Heart left ventricle (tissue), 16 donors: ENCODE measurements at regions of chr9 and their contacts with region 1.

Region 1: DNA sequence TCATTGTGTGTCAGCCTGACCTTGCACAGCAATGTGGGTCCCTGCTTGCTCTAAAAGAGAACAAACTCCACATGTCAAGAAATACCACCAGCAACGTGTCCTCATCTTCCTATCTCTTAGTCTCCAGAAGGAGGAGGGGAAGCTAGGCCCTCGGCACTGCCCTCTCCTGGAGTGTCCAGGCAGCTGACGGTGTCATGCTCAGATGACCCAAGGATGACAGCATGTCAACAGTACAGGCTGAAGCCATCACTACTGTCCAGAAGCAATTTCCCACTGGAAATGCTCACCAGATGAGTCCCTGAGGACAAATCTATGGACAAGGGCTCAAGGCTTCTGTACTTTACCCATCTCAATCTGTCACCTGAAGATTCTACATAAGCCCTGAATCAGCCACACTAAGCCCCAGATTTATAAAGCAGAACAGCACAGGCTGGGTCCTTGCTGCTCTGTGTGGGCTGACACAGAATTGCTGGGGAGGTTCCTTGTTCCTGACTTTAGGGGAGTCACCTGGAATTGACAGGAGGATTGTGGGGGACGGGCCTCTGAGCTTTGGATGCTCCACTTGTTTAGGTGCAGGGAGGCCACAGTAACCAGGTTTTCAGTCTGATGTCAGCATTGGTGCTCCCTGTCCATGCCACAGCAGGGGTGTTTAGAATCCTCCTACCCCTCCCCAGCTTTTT is 210.2 kb downstream of the DAB2IP start:
- DNase-seq: peak; percentile 38 to 71 (median 61)
- ATAC-seq: peak; percentile 68 to 87 (median 82)
- H3K4me3 ChIP-seq: no peak overlapping the region
- H3K27ac ChIP-seq: no peak overlapping the region
- H3K4me1 ChIP-seq: peaks cover 0 to 19% (median 11%) of the 10 kb centered on the region in 12 donors
- H3K27me3 ChIP-seq: no peaks in the 10 kb centered on the region
- CTCF ChIP-seq: peak; percentile 32 to 74 (median 62)
- POLR2A ChIP-seq: no peak

Region 2: DNA sequence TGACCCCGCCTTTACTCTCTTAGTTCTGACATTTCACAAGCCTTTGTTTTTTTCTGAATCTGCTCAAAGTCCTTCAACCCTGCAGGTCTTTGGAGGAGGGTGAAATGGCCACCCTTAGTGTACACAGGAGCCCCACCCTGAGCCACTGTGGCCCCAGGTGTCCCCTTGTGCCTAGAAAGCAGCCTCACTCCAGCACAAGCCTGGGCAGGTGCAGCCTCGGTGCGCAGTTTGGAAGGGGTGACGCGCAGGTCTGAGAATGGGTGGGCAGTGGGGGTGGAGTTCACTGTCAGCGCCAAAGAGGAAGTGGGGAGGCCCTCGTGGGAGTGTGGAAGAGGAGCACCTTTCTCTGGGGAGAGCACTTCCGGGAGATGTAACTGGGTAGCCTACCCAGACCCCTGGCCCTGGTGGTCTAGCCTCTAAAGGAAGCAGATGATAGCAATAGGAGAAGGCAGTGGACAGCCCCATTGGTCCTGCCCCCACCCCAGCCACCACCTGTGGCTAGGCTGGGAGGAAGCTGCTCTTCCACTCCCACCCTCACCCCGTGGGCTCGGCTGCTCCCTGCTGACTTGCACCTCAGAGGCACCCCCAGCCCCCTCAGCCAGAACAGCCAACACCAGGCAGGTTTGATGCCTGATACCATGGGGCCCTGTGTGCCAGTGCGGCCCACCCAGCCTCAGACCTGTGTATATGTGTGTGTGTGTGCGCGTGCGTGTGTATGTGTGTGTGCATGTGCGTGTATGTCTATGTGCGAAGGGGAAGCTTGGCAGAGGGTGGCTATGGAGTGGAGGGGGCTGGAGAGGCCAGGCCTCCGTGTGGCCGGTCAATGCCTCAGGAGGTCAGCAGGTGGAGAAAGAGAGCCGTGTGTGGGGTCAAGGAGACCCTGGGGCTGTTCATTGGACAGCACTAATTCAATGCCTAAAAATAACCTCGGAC is 227.0 kb before region 1 on chr9:
- intact Hi-C with region 1: loop called in 4 of 10 experiments (anchors 10 kb)
- DNase-seq: no peak
- ATAC-seq: peak; percentile 60 to 79 (median 64)
- H3K4me3 ChIP-seq: no peak overlapping the region
- H3K27ac ChIP-seq: peak overlapping the region in 5 of 12 donors; percentile 6 to 66 (median 34)
- H3K4me1 ChIP-seq: peaks cover 15 to 60% (median 43%) of the 10 kb centered on the region in 12 donors
- H3K27me3 ChIP-seq: no peaks in the 10 kb centered on the region
- CTCF ChIP-seq: peak; percentile 35 to 74 (median 62)
- POLR2A ChIP-seq: no peak

Region 3: DNA sequence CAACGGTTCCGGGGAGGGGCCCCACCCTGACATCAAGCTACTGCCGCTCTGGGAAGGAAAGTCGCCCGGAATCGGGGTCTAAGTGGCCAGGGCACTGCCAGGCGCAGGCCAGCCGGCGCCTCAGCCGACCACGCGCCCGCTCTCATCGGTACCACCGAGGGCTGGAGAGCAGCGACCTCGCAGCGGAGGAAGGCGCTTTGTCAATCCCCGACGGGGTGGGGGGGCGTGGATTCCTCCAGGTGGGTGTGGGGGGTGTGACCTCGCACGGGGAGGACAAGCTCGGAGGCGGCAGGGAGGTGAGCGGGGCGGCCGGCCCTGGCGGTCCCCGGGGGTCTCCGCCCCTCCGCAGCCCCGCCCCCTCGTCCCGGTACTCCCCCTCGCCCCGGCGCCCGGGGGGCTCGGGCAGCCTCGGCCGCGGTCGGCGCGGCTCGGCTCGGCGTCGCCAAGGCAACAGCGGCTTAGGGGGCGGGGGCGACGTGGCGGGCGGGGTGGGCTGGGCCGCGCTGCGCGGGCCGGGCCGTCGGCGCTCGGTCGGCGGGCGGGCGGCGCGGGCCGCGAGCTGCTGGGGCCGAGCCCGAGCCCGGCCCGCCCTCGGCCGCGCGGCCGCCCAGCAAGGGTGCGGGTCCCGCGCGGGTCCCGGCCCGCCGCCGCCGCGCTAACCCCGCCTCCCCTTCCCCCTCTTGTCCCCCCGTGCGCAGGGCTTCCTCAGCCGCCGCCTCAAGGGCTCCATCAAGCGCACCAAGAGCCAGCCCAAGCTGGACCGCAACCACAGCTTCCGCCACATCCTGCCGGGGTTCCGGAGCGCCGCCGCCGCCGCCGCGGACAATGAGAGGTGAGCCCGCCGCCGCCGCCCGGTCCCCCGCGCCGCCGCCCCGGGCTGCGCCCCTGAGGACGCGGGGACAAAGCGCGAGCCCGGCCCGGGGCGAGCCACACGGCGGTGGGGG is 162.7 kb before region 1 on chr9:
- intact Hi-C with region 1: loop called in 1 of 10 experiments (anchors 5 kb)
- DNase-seq: peak; percentile 69 to 85 (median 78)
- ATAC-seq: peak in 3 of 4 donors; percentile 39 to 44 (median 44)
- H3K4me3 ChIP-seq: peak overlapping the region; percentile 19 to 77 (median 58)
- H3K27ac ChIP-seq: peak overlapping the region; percentile 48 to 88 (median 80)
- H3K4me1 ChIP-seq: peaks cover 17 to 61% (median 36%) of the 10 kb centered on the region in 12 donors
- H3K27me3 ChIP-seq: peaks cover 0 to 37% (median 0%) of the 10 kb centered on the region in 9 donors
- CTCF ChIP-seq: no peak
- POLR2A ChIP-seq: no peak

Region 4: DNA sequence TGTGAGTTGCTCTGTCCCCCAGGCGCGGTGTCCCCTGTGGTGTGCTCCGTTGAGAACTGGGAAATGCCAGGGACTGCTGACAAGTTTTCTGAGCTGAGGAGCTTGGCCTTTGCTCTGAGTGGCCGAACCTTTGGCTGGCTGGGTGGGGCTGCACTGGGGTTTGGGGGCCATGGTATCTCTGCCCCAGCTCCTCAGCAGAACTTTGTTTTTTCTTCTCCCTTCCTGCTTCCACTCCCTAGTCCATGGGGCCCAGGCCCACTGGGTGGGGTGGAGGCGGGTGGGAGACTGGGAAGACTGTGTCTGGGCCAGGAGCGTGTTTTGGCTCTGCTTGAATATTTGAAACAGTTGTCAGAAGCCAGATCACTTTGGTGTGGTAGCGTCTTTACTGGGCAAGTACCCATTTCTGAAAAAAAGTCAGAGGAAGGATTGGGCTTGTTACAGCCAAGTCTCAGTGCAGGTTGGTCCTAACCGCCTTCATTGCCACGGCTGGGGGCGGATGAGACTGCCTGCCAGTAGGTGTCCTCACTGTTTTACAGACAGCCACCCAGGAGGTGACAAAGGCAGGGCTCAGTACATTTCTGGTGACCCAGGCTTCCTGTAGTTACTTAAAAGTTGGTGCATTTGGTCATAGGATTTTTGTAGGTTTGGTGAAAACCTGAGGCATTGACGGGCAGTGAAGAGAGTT is 117.5 kb before region 1 on chr9:
- intact Hi-C with region 1: loop called in 3 of 10 experiments (anchors 5 kb)
- DNase-seq: peak in 4 of 5 donors; percentile 70 to 79 (median 75)
- ATAC-seq: peak; percentile 61 to 72 (median 63)
- H3K4me3 ChIP-seq: peak overlapping the region; percentile 15 to 75 (median 56)
- H3K27ac ChIP-seq: peak overlapping the region; percentile 87 to 99 (median 94)
- H3K4me1 ChIP-seq: peaks cover 23 to 99% (median 94%) of the 10 kb centered on the region in 12 donors
- H3K27me3 ChIP-seq: no peaks in the 10 kb centered on the region
- CTCF ChIP-seq: peak; percentile 18 to 78 (median 55)
- POLR2A ChIP-seq: no peak

Region 5: GRCh38 chr9:121783521-121784507 is 77.8 kb before region 1 on chr9:
- intact Hi-C with region 1: loop called in 2 of 10 experiments (anchors 5 kb)
- DNase-seq: peak in 3 of 5 donors; percentile 6 to 58 (median 23)
- ATAC-seq: no peak
- H3K4me3 ChIP-seq: no peak overlapping the region
- H3K27ac ChIP-seq: peak overlapping the region in 1 of 12 donors; percentile 13
- H3K4me1 ChIP-seq: peaks cover 0 to 41% (median 20%) of the 10 kb centered on the region in 12 donors
- H3K27me3 ChIP-seq: no peaks in the 10 kb centered on the region
- CTCF ChIP-seq: no peak
- POLR2A ChIP-seq: no peak